G401 (cell line): ENCODE measurements at regions of chr14 and their contacts with region 1.

Region 1: GRCh38 chr14:74856366-74856765 is 19.6 kb downstream of the PROX2 start:
- DNase-seq: no peak

Region 2: DNA sequence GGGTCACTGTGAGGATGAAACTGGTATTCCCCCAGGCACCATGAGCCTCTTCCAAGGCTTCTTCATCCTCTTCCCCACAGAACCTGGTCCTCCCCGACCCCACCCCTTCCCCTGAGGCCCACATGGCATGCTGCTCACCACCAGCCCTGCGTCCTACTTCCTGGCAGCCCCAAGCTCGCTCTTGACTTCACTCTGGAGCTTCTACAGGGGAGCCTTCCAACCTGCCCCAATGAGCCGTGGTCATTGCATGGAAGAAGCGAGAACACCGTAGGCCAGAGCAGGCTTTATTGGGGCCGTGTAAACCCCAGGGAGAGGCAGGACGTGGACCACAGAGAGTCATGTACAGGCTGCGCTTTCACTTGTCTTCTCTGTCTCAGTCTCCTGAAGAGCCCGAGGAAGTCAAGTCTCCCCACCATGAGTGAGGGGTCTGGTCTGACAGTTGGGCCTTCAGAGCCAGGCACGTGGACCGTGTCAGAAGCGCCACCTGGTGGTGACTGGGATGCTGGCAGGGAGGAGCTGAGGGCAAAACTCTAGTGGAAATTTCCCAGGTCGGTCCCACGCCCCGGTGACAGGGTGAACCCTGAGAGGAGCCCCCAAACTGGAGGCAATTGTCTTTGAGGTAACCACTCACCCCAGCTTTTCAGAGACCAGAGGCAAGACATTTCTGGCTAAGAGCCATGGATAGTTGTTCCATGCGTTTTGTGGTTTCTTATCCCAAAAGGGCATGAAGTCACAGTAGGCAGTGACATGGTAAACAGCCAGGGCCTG is 49.2 kb after region 1 on chr14:
- in situ Hi-C with region 1: loop called (anchors 5 kb)
- DNase-seq: peak; percentile 62